ENCODE measurements at regions of chr14 and their contacts with region 1.

Region 1: GRCh38 chr14:55077155-55077554 is 25.7 kb downstream of the MAPK1IP1L start:
- DNase-seq: peak; percentile 46 to 61
- H3K4me3 ChIP-seq: no peak overlapping the region; the same call in 1 of the 2 replicates
- H3K27ac ChIP-seq: peak overlapping the region; percentile 81
- H3K4me1 ChIP-seq: peaks cover 11% of the 10 kb centered on the region
- H3K27me3 ChIP-seq: no peaks in the 10 kb centered on the region
- CTCF ChIP-seq: no peak

Region 2: GRCh38 chr14:55026793-55027561 is 50.2 kb before region 1 on chr14 and contains the starts of genes SOCS4 and WDHD1:
- CTCF ChIA-PET with region 1: no interaction called
- POLR2A ChIA-PET with region 1: interaction called, 23 read pairs
- intact Hi-C with region 1: no loop called
- DNase-seq: peak; percentile 83 to 96
- H3K4me3 ChIP-seq: peak within 1 kb of the TSS; percentile 80
- H3K27ac ChIP-seq: peak within 1 kb of the TSS; percentile 45
- H3K4me1 ChIP-seq: peaks cover 26% of the 10 kb centered on the region
- H3K27me3 ChIP-seq: no peaks in the 10 kb centered on the region
- CTCF ChIP-seq: no peak
- total RNA-seq, gene SOCS4: 25.3 and 33.4 TPM in 2 replicates
- total RNA-seq, gene WDHD1: 27.9 and 34.3 TPM in 2 replicates

Region 3: DNA sequence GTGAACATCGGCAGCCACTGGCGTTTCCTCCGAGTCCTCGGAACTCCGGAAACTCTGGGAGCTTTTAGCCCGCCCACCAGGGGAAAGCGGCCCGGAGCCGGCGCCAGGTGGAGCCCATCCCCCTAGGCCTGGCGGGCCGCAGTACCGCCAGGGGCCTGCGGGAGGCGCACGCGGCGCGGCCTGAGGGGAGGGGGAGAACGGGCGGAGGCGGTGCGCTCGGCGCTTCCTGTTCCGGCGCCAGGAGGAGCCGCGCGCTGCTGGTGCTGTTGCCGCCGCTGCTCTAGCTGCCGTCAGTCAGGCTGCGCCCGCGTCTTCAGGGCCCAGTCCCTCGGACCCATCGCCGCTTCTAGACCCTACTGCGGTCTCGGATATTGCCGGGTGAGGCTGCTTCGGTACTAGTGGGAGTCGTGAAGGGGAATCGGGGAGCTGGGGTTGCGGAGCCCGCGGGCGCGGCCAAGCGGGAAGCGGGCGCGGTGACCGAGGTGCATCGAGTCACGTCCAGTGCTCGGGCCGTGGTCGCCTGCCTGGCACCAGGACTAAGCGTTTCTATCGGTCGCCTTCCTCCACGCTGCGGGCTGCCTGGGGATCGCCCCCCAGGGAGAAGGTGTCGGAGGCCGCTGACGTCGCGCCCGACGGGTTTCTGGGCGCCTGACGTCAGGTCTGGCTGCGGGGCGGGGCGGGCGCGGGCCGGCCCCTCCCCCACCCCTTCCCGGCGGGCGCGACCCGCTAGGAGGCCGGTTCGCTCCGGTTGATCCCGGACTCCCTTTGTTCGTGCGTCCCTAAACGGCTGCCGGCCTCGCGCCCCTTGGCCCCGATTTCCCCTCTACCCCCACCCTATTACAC is 25.5 kb before region 1 on chr14 and contains the start of gene MAPK1IP1L:
- CTCF ChIA-PET with region 1: interaction called, 7 read pairs
- POLR2A ChIA-PET with region 1: interaction called, 5 read pairs
- intact Hi-C with region 1: loop called (anchors 2 kb)
- DNase-seq: peak; percentile 88 to 97
- H3K4me3 ChIP-seq: peak within 1 kb of the TSS; percentile 80
- H3K27ac ChIP-seq: peak within 1 kb of the TSS; percentile 88
- H3K4me1 ChIP-seq: peaks cover 17% of the 10 kb centered on the region
- H3K27me3 ChIP-seq: no peaks in the 10 kb centered on the region
- CTCF ChIP-seq: peak; percentile 94
- total RNA-seq, gene MAPK1IP1L: 54.3 and 79.7 TPM in 2 replicates

Region 4: GRCh38 chr14:55102141-55102621 is 25.0 kb after region 1 on chr14:
- CTCF ChIA-PET with region 1: no interaction called
- POLR2A ChIA-PET with region 1: interaction called, 6 read pairs
- intact Hi-C with region 1: loop called (anchors 1 kb)
- DNase-seq: peak; percentile 89 to 97
- H3K4me3 ChIP-seq: peak overlapping the region; percentile 52; the same call in 1 of the 2 replicates
- H3K27ac ChIP-seq: peak overlapping the region; percentile 99
- H3K4me1 ChIP-seq: peaks cover 73% of the 10 kb centered on the region
- H3K27me3 ChIP-seq: no peaks in the 10 kb centered on the region
- CTCF ChIP-seq: no peak

Region 5: DNA sequence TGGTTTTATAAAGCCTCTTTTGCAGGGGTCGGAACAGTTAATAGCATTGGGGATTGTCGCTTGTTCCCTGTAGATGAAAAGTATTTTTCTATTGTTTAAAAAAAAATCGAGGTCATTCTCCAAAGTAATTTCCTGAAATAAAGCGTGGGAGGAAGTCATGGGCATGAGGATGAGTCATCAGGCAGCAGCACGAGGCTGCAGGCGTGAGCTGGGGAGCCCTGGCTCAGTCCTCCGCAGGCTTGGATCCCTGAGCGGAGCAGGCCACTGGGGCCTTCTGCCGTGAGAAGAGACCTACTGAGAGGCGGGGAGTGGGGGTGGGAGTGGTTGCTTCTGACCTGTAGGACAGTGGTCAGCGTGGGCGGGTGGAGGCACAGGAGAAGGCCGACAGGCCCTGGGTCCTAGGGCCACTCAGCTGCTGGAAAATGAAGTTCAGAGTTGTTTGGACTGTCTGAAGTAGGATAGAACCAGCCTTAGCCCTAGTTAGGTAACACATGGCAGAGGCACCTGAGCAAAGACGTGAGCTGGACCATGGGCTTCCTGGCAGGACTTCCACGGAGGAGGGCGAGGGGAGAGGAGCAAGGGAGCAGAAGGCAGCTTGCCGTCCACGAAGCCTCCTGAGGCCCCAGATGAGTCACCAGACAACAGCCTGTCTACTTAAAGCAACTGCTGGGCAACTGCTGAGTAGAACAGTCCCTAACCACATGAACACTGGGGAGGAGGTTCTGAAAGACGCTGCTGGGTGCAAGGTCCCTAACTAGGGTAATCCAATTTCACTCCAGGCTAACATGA is 30.8 kb after region 1 on chr14:
- CTCF ChIA-PET with region 1: interaction called, 8 read pairs
- POLR2A ChIA-PET with region 1: interaction called, 14 read pairs
- intact Hi-C with region 1: loop called (anchors 1 kb)
- DNase-seq: peak; percentile 80 to 81
- H3K4me3 ChIP-seq: no peak overlapping the region
- H3K27ac ChIP-seq: peak overlapping the region; percentile 90
- H3K4me1 ChIP-seq: peaks cover 53% of the 10 kb centered on the region
- H3K27me3 ChIP-seq: no peaks in the 10 kb centered on the region
- CTCF ChIP-seq: no peak

Region 6: GRCh38 chr14:55129428-55130195 is 52.5 kb after region 1 on chr14:
- CTCF ChIA-PET with region 1: no interaction called
- POLR2A ChIA-PET with region 1: interaction called, 13 read pairs
- intact Hi-C with region 1: no loop called
- DNase-seq: peak; percentile 53 to 57
- H3K4me3 ChIP-seq: peak overlapping the region; percentile 77
- H3K27ac ChIP-seq: peak overlapping the region; percentile 72
- H3K4me1 ChIP-seq: peaks cover 58% of the 10 kb centered on the region
- H3K27me3 ChIP-seq: no peaks in the 10 kb centered on the region
- CTCF ChIP-seq: no peak

Region 7: GRCh38 chr14:55270832-55271565 is 193.8 kb after region 1 on chr14 and contains the start of gene FBXO34:
- CTCF ChIA-PET with region 1: no interaction called
- POLR2A ChIA-PET with region 1: no interaction called
- intact Hi-C with region 1: no loop called
- DNase-seq: peak; percentile 86 to 99
- H3K4me3 ChIP-seq: peak within 1 kb of the TSS; percentile 98
- H3K27ac ChIP-seq: peak within 1 kb of the TSS; percentile 71
- H3K4me1 ChIP-seq: peaks cover 37% of the 10 kb centered on the region
- H3K27me3 ChIP-seq: no peaks in the 10 kb centered on the region
- CTCF ChIP-seq: peak; percentile 94
- total RNA-seq, gene FBXO34: 32.8 and 33.1 TPM in 2 replicates